ENCODE measurements at regions of chr15 and their contacts with region 1.

Region 1: GRCh38 chr15:51917493-51917892 is 54.1 kb downstream of the LEO1 start:
- DNase-seq: no peak
- ATAC-seq: peak; percentile 91
- H3K4me3 ChIP-seq: no peak overlapping the region
- H3K27ac ChIP-seq: no peak overlapping the region
- H3K4me1 ChIP-seq: no peaks in the 10 kb centered on the region
- H3K27me3 ChIP-seq: no peaks in the 10 kb centered on the region
- CTCF ChIP-seq: peak; percentile 76

Region 2: GRCh38 chr15:51888593-51889195 is 28.8 kb before region 1 on chr15:
- CTCF ChIA-PET with region 1: no interaction called
- POLR2A ChIA-PET with region 1: no interaction called
- in situ Hi-C with region 1: no loop called
- intact Hi-C with region 1: no loop called
- DNase-seq: no peak
- ATAC-seq: no peak
- H3K4me3 ChIP-seq: no peak overlapping the region
- H3K27ac ChIP-seq: no peak overlapping the region
- H3K4me1 ChIP-seq: no peaks in the 10 kb centered on the region
- H3K27me3 ChIP-seq: no peaks in the 10 kb centered on the region
- CTCF ChIP-seq: peak; percentile 85; the same call in 1 of the 2 replicates

Region 3: GRCh38 chr15:51904931-51905330 is 12.6 kb before region 1 on chr15:
- CTCF ChIA-PET with region 1: no interaction called
- POLR2A ChIA-PET with region 1: interaction called, 10 read pairs
- in situ Hi-C with region 1: no loop called
- intact Hi-C with region 1: no loop called
- DNase-seq: no peak
- ATAC-seq: no peak
- H3K4me3 ChIP-seq: no peak overlapping the region
- H3K27ac ChIP-seq: no peak overlapping the region
- H3K4me1 ChIP-seq: peaks cover 11% of the 10 kb centered on the region; the same call in 1 of the 2 replicates
- H3K27me3 ChIP-seq: no peaks in the 10 kb centered on the region
- CTCF ChIP-seq: no peak

Region 4: DNA sequence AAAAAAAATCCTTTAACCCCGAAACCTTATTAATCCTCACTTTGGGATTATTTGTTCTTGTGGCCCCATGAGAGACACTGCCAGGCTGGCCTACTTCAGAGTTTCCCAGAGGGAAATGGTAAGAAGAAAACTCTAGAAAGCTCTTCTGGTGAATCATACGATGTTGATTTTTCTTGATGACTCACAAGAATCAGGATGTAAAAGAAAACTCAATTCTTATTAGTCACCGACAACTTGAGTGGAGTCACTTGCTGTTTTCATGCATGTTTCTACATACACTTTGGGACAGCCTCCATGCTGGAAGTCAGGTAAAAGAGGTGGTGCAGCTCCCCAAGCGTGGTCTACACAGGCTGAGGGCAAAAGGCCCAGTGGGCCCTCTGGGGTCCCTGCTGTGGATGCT is 335.3 kb after region 1 on chr15:
- CTCF ChIA-PET with region 1: no interaction called
- POLR2A ChIA-PET with region 1: no interaction called
- in situ Hi-C with region 1: no loop called
- intact Hi-C with region 1: no loop called
- DNase-seq: peak; percentile 94
- ATAC-seq: peak; percentile 77
- H3K4me3 ChIP-seq: no peak overlapping the region
- H3K27ac ChIP-seq: peak overlapping the region; percentile 14; the same call in 1 of the 2 replicates
- H3K4me1 ChIP-seq: peaks cover 17% of the 10 kb centered on the region
- H3K27me3 ChIP-seq: no peaks in the 10 kb centered on the region
- CTCF ChIP-seq: no peak

Measured in Panc1 (cell line).